H1 (cell line): ENCODE measurements at regions of chr12 and their contacts with region 1.

Region 1: DNA sequence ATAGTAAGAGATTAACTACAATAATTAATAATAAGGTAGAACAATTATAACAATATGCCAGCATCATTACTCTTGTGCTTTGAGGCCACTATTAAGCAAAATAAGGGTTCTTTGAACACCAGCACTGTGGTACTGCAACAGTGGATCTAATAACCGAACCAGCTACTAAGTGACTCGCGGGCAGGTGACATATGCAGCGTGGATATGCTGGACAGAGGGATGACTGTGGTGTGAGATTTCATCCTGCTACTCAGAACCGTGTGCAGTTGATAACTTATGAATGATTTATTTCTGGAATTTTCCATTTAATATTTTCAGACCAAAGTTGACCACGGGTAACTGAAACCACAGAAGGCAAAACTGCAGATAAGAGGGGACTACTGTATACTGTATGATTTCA is 34.4 kb downstream of the BMAL2 start:
- DNase-seq: no peak
- H3K4me3 ChIP-seq: no peak overlapping the region
- H3K27ac ChIP-seq: no peak overlapping the region
- H3K4me1 ChIP-seq: no peaks in the 10 kb centered on the region
- H3K27me3 ChIP-seq: no peaks in the 10 kb centered on the region
- CTCF ChIP-seq: no peak
- EP300 ChIP-seq: no peak
- POLR2A ChIP-seq: no peak
- RAD21 ChIP-seq: no peak

Region 2: DNA sequence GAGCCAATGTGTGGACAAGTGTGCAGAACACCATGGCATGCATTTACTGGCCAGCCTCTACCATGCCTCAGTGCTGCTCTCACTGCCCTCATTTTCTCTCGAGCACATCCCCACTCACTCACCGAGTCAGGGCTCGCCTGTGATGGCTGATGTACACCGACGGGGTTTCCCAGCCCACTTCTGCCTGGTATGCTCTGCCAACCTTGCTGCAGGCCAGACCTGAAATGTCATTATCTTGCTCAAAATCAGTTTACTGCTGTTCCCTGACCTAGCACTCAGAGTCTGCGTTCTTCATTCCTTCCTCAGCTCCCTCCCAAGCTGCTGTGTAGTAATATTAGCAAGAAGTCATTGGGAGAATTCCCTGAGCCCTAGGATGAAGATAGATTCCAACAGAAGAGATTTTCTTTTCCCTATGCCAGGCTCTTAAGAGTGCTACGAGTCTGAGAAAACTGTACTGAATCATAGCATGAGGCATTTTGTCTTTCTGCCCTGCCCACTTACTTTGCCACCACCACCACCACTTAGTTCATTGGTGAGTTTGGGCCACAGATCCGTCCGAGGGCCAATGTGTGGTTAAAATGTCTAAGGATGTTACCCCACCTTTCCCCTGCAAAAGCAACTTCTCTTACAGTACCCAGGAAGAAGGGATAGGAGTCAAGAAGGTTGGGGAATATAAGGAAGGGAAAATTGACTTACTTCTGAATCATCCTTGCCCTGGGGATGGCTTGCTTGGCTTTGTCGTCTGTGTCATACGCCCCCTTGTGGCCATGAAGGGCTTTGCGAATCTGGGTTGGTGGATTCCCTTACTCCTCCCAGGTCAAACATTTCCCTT is 16.6 kb after region 1 on chr12:
- CTCF ChIA-PET with region 1: interaction called, 27 read pairs
- POLR2A ChIA-PET with region 1: no interaction called
- DNase-seq: peak; percentile 38 to 89
- H3K4me3 ChIP-seq: no peak overlapping the region
- H3K27ac ChIP-seq: no peak overlapping the region
- H3K4me1 ChIP-seq: no peaks in the 10 kb centered on the region
- H3K27me3 ChIP-seq: no peaks in the 10 kb centered on the region
- CTCF ChIP-seq: peak; percentile 78 to 97 (median 94)
- EP300 ChIP-seq: no peak
- POLR2A ChIP-seq: no peak
- RAD21 ChIP-seq: peak; percentile 77 to 83